Heart right ventricle (tissue), 16 donors: ENCODE measurements at regions of chr4 and their contacts with region 1.

Region 1: DNA sequence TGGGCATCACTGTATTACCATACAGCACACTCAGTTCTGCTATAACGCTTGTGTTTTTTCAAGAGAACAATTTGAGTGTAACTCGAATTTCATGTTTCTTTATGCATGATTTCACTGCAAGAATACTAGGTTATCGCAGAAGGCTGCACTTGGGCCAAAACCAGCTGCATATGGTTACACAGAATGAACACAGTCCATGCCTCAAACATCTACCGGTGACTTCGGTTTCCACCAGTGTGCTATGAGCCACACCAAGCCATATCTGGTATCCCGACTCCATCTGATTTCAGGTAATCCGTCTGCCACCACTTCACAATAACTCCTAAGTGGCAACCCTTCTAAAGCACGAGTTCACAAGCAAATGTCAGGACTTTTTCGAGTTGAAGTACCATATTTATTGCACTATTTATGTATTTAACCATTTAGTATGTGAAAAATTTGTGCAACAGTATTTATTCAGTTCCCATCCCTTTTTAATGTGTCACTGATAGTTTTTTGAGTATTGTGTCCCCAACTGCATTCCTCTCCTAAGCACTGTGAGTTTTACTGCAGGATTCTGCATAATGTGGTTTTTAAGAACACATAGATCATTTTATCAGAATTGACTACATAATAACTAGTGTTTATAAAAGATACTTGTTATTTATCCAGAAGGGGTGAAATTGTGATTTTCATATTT is 111.8 kb downstream of the APBB2 start:
- DNase-seq: no peak
- ATAC-seq: no peak
- H3K4me3 ChIP-seq: no peak overlapping the region
- H3K27ac ChIP-seq: peak overlapping the region in 1 of 10 donors; percentile 17
- H3K4me1 ChIP-seq: peaks cover 0 to 77% (median 34%) of the 10 kb centered on the region in 9 donors
- H3K27me3 ChIP-seq: no peaks in the 10 kb centered on the region
- CTCF ChIP-seq: no peak

Region 2: GRCh38 chr4:41135801-41136200 is 33.2 kb after region 1 on chr4:
- intact Hi-C with region 1: loop called in 1 of 10 experiments (anchors 5 kb)
- DNase-seq: no peak
- ATAC-seq: no peak
- H3K4me3 ChIP-seq: no peak overlapping the region
- H3K27ac ChIP-seq: peak overlapping the region in 1 of 10 donors; percentile 41
- H3K4me1 ChIP-seq: peaks cover 0 to 51% (median 28%) of the 10 kb centered on the region in 9 donors
- H3K27me3 ChIP-seq: no peaks in the 10 kb centered on the region
- CTCF ChIP-seq: no peak